ENCODE measurements at regions of chr7 and their contacts with region 1.

Region 1: DNA sequence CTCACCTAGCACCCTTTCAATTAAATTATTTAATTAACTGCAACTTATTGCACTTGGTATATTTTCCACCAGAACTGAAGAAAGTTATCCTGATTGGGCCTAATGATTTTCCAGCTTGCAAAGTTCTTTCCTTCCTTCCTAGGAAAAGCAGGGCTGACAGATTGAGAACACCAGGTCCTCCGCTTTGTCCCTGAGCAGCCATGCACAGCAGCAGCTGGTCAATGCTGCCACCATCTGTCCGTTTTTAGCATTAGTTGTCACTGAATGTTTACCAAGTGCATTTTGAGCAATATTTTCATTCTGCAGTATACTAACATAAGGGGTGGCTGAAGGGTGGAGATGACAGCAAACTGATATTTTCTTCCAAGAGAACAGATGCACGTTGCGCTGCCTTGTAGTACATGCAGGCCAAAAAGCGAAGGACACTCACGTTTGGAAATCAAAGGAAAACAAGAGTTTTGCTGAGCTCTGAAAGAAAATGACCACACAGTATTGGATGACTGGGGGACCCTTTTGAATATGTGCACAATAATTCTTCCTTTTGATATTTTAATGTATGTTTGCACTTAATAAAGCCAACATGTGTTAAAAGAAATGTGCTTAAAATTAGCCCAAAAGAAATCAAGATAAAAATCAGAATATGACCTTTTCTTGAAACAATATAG is 248.8 kb upstream of the PTN start:
- DNase-seq: peak; percentile 55
- H3K4me3 ChIP-seq: no peak overlapping the region
- H3K27ac ChIP-seq: no peak overlapping the region
- H3K4me1 ChIP-seq: no peaks in the 10 kb centered on the region
- H3K27me3 ChIP-seq: no peaks in the 10 kb centered on the region
- CTCF ChIP-seq: peak; percentile 55

Region 2: GRCh38 chr7:135801045-135801693 is 1791.2 kb before region 1 on chr7:
- intact Hi-C with region 1: loop called (anchors 10 kb)
- DNase-seq: peak; percentile 38
- H3K4me3 ChIP-seq: no peak overlapping the region
- H3K27ac ChIP-seq: no peak overlapping the region
- H3K4me1 ChIP-seq: no peaks in the 10 kb centered on the region
- H3K27me3 ChIP-seq: no peaks in the 10 kb centered on the region
- CTCF ChIP-seq: peak; percentile 75

Region 3: DNA sequence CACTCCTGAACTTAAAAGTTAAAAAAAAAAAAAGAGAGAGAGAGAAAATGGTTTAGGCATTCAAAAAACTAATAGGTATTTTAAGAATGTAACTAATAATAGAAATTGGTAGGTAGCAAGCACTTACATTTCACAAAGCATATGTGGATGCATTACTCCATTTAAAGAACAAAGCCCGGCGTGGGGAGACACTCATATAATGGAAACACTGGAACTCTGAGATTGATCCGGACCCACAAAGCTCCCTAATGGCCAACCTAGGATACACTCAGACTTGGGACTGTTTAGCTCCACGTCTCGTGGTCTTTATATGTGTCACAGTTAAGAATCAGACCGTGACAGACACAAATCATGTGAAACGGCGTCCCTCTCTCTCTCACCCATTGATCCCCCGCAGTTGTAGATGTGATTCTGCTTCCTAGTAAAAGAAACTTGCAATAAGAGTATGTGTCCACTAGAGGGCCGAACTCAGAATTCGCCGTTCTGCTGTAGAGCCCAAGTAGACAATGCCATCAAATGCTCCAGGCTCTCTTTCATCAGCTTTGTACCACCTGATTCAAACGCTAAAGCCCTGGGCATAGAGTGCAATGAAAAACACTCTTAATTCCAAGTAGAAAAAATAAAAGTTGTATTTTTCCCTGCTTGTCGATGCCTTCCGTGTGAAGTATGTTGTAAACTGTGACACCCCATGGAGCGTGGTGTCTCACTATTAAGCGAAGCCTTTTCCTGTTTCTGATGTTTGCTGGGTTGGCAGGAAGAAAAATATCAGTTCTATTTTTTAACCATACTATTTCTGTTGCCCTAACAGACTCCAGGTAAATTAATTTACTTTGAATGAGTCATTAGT is 1186.2 kb before region 1 on chr7:
- intact Hi-C with region 1: loop called (anchors 5 kb)
- DNase-seq: peak; percentile 25
- H3K4me3 ChIP-seq: no peak overlapping the region
- H3K27ac ChIP-seq: no peak overlapping the region
- H3K4me1 ChIP-seq: no peaks in the 10 kb centered on the region
- H3K27me3 ChIP-seq: no peaks in the 10 kb centered on the region
- CTCF ChIP-seq: peak; percentile 67

Region 4: GRCh38 chr7:137169282-137169698 is 423.1 kb before region 1 on chr7:
- intact Hi-C with region 1: loop called (anchors 10 kb)
- DNase-seq: peak; percentile 38
- H3K4me3 ChIP-seq: no peak overlapping the region
- H3K27ac ChIP-seq: no peak overlapping the region
- H3K4me1 ChIP-seq: no peaks in the 10 kb centered on the region
- H3K27me3 ChIP-seq: no peaks in the 10 kb centered on the region
- CTCF ChIP-seq: peak; percentile 32

Region 5: DNA sequence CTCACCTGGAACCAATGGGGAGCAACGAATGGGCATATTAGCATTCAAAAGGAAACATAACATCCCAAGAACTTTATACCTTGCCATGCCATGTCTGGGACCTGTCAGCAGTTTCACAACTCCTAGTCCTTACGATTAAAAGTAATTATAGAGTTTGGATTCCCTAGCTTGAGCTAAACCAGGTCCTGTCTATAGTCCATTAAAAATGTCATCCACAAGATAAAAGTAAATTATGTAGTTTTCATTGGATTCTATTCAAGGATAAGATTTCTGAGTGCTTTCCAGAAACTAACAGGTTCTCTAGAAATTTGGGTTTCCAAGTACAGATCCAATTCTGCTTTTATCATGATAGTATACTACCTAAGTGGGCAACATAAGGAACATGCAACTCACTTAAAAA is 85.3 kb before region 1 on chr7:
- intact Hi-C with region 1: no loop called
- DNase-seq: no peak
- H3K4me3 ChIP-seq: no peak overlapping the region
- H3K27ac ChIP-seq: no peak overlapping the region
- H3K4me1 ChIP-seq: no peaks in the 10 kb centered on the region
- H3K27me3 ChIP-seq: no peaks in the 10 kb centered on the region
- CTCF ChIP-seq: no peak

Region 6: GRCh38 chr7:138527746-138528223 is 935.4 kb after region 1 on chr7:
- intact Hi-C with region 1: no loop called
- DNase-seq: no peak
- H3K4me3 ChIP-seq: no peak overlapping the region
- H3K27ac ChIP-seq: no peak overlapping the region
- H3K4me1 ChIP-seq: no peaks in the 10 kb centered on the region
- H3K27me3 ChIP-seq: no peaks in the 10 kb centered on the region
- CTCF ChIP-seq: no peak

Measured in colonic mucosa (tissue), 4 donors.